ENCODE measurements at regions of chr2 and their contacts with region 1.

Region 1: GRCh38 chr2:97806738-97807618 is 93.6 kb downstream of the ZAP70 start:
- DNase-seq: peak; percentile 44
- H3K4me3 ChIP-seq: no peak overlapping the region
- H3K27ac ChIP-seq: no peak overlapping the region
- H3K27me3 ChIP-seq: no peaks in the 10 kb centered on the region
- CTCF ChIP-seq: peak; percentile 94

Region 2: GRCh38 chr2:97766567-97766966 is 40.4 kb before region 1 on chr2:
- CTCF ChIA-PET with region 1: interaction called, 12 read pairs
- POLR2A ChIA-PET with region 1: no interaction called
- DNase-seq: no peak
- H3K4me3 ChIP-seq: no peak overlapping the region
- H3K27ac ChIP-seq: no peak overlapping the region
- H3K27me3 ChIP-seq: no peaks in the 10 kb centered on the region
- CTCF ChIP-seq: no peak

Region 3: GRCh38 chr2:97774425-97774824 is 32.6 kb before region 1 on chr2:
- CTCF ChIA-PET with region 1: interaction called, 13 read pairs
- POLR2A ChIA-PET with region 1: no interaction called
- DNase-seq: no peak
- H3K4me3 ChIP-seq: no peak overlapping the region
- H3K27ac ChIP-seq: no peak overlapping the region
- H3K27me3 ChIP-seq: no peaks in the 10 kb centered on the region
- CTCF ChIP-seq: peak; percentile 54

Region 4: DNA sequence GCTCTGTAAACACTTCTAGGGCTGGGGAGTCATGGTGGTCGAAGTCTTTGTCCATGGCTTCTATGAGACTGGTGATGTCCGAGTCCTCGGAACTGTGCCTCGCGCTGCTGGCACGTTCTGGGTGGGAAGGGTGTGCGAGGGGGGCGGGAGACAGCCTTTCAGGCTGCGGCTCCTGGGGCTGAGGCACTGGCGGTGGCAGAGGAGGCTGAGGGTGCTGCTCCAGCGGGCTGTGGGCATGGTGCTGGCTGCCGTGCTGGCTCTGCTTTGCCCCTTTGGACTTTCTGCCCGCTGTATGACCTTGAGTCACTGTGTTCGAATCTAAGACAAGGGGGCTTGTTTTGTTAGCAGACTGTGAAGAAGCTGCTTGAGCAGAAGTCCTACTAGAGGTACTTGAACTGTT is 14.6 kb before region 1 on chr2:
- CTCF ChIA-PET with region 1: interaction called, 42 read pairs
- POLR2A ChIA-PET with region 1: no interaction called
- DNase-seq: no peak
- H3K4me3 ChIP-seq: no peak overlapping the region
- H3K27ac ChIP-seq: no peak overlapping the region
- H3K27me3 ChIP-seq: no peaks in the 10 kb centered on the region
- CTCF ChIP-seq: no peak

Region 5: DNA sequence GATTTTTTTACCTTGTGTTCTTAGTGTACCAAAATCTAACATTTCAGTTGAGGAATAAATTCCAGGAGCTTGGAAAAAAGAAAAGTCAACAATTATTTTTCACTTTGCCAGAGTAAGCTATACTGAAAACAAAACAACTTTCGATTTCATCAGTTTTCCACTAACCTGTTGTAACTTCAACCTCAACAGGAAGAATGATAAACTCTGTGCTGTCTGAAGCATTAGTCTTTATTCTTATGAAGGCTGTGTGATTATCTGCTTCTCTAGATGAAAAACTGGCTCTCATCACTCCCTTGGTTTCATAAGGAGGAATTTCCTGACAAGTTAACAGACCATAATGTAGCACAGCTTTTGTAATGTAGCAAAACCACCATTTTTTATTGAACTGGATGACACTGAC is 27.6 kb after region 1 on chr2:
- CTCF ChIA-PET with region 1: interaction called, 14 read pairs
- POLR2A ChIA-PET with region 1: no interaction called
- DNase-seq: no peak
- H3K4me3 ChIP-seq: no peak overlapping the region
- H3K27ac ChIP-seq: no peak overlapping the region
- H3K27me3 ChIP-seq: no peaks in the 10 kb centered on the region
- CTCF ChIP-seq: no peak

Region 6: DNA sequence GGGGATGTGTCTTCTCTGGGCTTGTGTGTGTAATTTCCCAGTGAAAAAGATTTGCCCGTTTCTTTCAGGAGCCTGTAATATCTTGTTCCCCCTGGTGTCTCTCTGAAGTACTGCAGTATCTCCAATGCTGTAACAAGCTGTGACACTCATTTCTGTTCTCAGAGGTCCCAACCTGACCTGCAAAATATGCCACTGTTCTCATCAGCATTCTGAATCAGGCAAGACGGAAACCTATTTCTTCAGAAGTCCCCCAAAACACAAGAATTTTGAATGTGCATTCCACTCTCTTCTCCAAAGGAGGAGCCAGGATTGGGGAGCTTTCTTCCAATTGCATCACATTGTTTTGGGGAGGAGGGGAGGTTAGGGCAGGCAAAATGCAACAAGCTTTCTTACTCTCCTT is 462.3 kb after region 1 on chr2:
- CTCF ChIA-PET with region 1: interaction called, 57 read pairs
- POLR2A ChIA-PET with region 1: no interaction called
- DNase-seq: peak; percentile 15
- H3K4me3 ChIP-seq: no peak overlapping the region
- H3K27ac ChIP-seq: no peak overlapping the region
- H3K27me3 ChIP-seq: peaks cover 3% of the 10 kb centered on the region
- CTCF ChIP-seq: peak; percentile 80

Region 7: GRCh38 chr2:98385050-98385699 is 578.2 kb after region 1 on chr2:
- CTCF ChIA-PET with region 1: interaction called, 27 read pairs
- POLR2A ChIA-PET with region 1: no interaction called
- DNase-seq: peak; percentile 27
- H3K4me3 ChIP-seq: no peak overlapping the region
- H3K27ac ChIP-seq: no peak overlapping the region
- H3K27me3 ChIP-seq: peaks cover 26% of the 10 kb centered on the region
- CTCF ChIP-seq: peak; percentile 100

Measured in AG04450 (cell line).